Naive thymus-derived CD4-positive, alpha-beta T cell (primary cell): ENCODE measurements at regions of chr11 and their contacts with region 1.

Region 1: GRCh38 chr11:31487848-31488247 is 21.6 kb downstream of the IMMP1L start:
- DNase-seq: peak in 4 of 9 donors; percentile 10 to 26 (median 15)
- ATAC-seq: peak; percentile 32
- H3K4me3 ChIP-seq: no peak overlapping the region
- H3K4me3 Mint-ChIP-seq: no peak overlapping the region
- H3K27ac ChIP-seq: no peak overlapping the region
- H3K27ac Mint-ChIP-seq: no peak overlapping the region
- H3K4me1 ChIP-seq: no peaks in the 10 kb centered on the region
- H3K4me1 Mint-ChIP-seq: peaks cover 6 to 46% (median 40%) of the 10 kb centered on the region in 7 donors
- H3K27me3 ChIP-seq: no peaks in the 10 kb centered on the region
- H3K27me3 Mint-ChIP-seq: no peaks in the 10 kb centered on the region

Region 2: DNA sequence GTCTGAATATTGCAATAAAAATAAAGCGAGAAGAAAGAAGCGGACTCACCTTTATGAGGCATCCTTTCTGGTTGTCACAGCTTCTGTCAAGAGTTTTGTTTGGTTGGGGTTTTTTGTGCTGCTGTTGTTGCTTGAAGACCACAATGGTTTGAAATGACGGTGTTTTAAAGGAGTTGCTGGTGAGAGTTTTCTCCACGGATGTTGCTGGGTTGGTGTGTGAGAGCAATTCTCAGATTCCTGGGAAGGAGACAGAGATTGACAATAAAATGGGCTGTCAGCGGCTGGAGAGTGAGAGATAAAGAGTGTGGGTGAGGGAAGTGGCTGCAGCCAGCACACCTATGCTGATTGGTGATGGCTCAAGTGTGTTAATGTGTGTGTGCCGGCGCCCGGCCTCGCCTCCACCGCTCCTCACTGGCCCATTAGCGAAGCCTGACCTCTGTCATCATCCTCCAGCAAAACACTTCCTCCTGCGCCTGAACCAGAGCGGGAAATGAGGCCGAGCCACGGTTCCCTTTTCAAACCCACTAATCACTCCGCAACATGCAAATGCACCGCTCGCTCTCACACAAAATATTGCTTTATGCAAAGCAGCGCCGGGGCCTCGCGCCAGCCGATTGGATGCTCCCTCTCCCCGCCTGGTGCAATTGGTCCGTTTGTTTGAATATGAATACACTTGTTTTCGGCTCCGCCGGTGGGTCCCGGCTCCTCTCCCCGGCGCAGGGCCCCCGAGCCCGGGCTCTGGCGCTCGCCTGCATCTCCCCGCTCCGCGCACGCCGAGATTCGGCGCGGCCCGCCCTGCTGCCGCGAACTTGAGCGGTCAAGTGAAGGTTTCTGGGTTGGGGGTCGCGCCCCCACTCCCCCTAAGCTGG is 323.2 kb after region 1 on chr11 and contains the start of gene PAX6:
- CTCF ChIA-PET with region 1: no interaction called
- POLR2A ChIA-PET with region 1: no interaction called
- intact Hi-C with region 1: loop called in 1 of 2 experiments (anchors 10 kb)
- DNase-seq: peak in 2 of 9 donors; percentile 19 to 43
- ATAC-seq: peak; percentile 77
- H3K4me3 ChIP-seq: peak within 1 kb of the TSS; percentile 46
- H3K4me3 Mint-ChIP-seq: peak within 1 kb of the TSS; percentile 73 to 94 (median 84)
- H3K27ac ChIP-seq: no peak within 1 kb of the TSS
- H3K27ac Mint-ChIP-seq: peak within 1 kb of the TSS in 5 of 9 donors; percentile 8 to 73 (median 59)
- H3K4me1 ChIP-seq: peaks cover 16 to 28% of the 10 kb centered on the region in 2 donors
- H3K4me1 Mint-ChIP-seq: peaks cover 22 to 73% (median 61%) of the 10 kb centered on the region in 7 donors
- H3K27me3 ChIP-seq: peaks cover 16 to 66% of the 10 kb centered on the region in 2 donors
- H3K27me3 Mint-ChIP-seq: peaks cover 73 to 86% (median 77%) of the 10 kb centered on the region in 5 donors
- total RNA-seq, gene PAX6: not detected

Region 3: GRCh38 chr11:32006799-32007388 is 519.0 kb after region 1 on chr11:
- CTCF ChIA-PET with region 1: no interaction called
- POLR2A ChIA-PET with region 1: no interaction called
- intact Hi-C with region 1: loop called in 1 of 2 experiments (anchors 5 kb)
- DNase-seq: peak in 5 of 9 donors; percentile 4 to 27 (median 7)
- ATAC-seq: peak; percentile 64
- H3K4me3 ChIP-seq: no peak overlapping the region
- H3K4me3 Mint-ChIP-seq: peak overlapping the region in 1 of 10 donors; percentile 2
- H3K27ac ChIP-seq: no peak overlapping the region
- H3K27ac Mint-ChIP-seq: no peak overlapping the region
- H3K4me1 ChIP-seq: no peaks in the 10 kb centered on the region
- H3K4me1 Mint-ChIP-seq: peaks cover 0 to 5% (median 0%) of the 10 kb centered on the region in 7 donors
- H3K27me3 ChIP-seq: no peaks in the 10 kb centered on the region
- H3K27me3 Mint-ChIP-seq: peaks cover 17 to 40% (median 35%) of the 10 kb centered on the region in 5 donors

Region 4: DNA sequence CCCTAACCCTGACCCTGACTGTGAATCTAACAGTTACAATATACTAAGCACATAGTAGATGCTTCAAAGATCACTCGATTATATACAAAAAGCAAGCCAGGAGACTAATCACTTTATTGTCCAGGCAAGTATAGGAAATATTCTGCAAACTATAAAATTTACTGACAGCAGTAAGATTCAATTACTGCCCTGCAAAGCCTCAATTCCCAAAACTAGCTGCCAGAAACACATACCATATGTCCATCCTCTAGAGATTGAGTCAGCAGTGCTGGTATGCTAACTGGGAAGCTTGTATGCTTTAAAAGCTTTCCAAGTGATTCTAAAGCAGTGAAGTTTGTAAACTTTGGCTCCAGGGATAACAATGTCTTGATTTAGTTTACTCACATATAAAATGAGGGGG is 1647.4 kb after region 1 on chr11:
- CTCF ChIA-PET with region 1: no interaction called
- POLR2A ChIA-PET with region 1: no interaction called
- intact Hi-C with region 1: no loop called
- DNase-seq: no peak
- ATAC-seq: no peak
- H3K4me3 ChIP-seq: no peak overlapping the region
- H3K4me3 Mint-ChIP-seq: no peak overlapping the region
- H3K27ac ChIP-seq: no peak overlapping the region
- H3K27ac Mint-ChIP-seq: no peak overlapping the region
- H3K4me1 ChIP-seq: no peaks in the 10 kb centered on the region
- H3K4me1 Mint-ChIP-seq: peaks cover 0 to 24% (median 15%) of the 10 kb centered on the region in 7 donors
- H3K27me3 ChIP-seq: no peaks in the 10 kb centered on the region
- H3K27me3 Mint-ChIP-seq: no peaks in the 10 kb centered on the region